ENCODE measurements at regions of chr3 and their contacts with region 1.

Region 1: DNA sequence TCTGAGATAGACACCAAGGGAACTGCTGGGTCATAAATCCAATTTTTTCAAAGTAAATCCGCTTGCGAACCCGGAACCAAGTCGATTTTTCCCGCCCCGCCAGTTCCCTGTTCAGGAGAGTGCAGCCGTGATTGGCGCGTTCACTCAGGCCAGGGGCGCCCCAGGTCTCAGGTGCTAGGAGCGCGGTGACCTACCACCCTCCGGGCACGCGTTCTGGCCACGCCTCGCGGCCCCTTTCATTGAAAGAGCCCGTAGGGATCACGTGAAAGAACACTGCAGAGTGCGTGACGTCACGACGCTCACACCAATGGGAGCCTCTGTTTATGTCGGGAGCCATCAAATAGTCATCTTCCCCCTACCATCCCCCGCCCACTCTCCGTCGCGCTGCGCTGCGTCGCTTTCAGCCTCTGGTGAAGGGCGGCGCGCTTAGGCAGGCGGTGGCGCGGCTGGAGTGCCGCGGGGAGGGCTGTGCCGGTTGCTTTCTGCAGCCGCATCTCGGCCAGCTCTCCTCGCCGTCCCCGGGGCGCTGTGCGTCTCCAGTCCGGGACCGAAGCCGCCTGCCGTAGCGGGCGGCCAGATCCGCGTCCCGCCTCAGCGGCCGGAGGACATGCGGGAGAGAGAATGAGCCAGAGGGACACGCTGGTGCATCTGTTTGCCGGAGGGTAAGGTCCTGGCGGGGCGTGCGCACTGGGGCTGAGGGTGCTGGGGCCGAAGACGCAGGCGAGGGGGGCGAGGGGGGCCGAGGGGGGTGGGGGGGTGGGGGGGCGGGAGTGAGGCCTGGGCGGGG is at the start of gene SLC25A36:
- DNase-seq: peak; percentile 90 to 100 (median 96)
- ATAC-seq: peak; percentile 96
- H3K4me3 ChIP-seq: peak within 1 kb of the TSS; percentile 71 to 78
- H3K4me3 Mint-ChIP-seq: peak within 1 kb of the TSS; percentile 90
- H3K27ac ChIP-seq: peak within 1 kb of the TSS; percentile 85 to 88
- H3K27ac Mint-ChIP-seq: peak within 1 kb of the TSS; percentile 99
- H3K4me1 ChIP-seq: peaks cover 14% of the 10 kb centered on the region
- H3K4me1 Mint-ChIP-seq: peaks cover 36% of the 10 kb centered on the region
- H3K27me3 ChIP-seq: no peaks in the 10 kb centered on the region
- H3K27me3 Mint-ChIP-seq: no peaks in the 10 kb centered on the region
- CTCF ChIP-seq: no peak
- total RNA-seq, gene SLC25A36: 156 to 165 TPM

Region 2: GRCh38 chr3:138941259-138941885 is 2000.3 kb before region 1 on chr3:
- CTCF ChIA-PET with region 1: no interaction called
- POLR2A ChIA-PET with region 1: no interaction called
- intact Hi-C with region 1: loop called in 1 of 2 experiments (anchors 10 kb)
- DNase-seq: peak in 1 of 9 experiments; percentile 40
- ATAC-seq: no peak
- H3K4me3 ChIP-seq: no peak overlapping the region
- H3K4me3 Mint-ChIP-seq: no peak overlapping the region
- H3K27ac ChIP-seq: no peak overlapping the region
- H3K27ac Mint-ChIP-seq: no peak overlapping the region
- H3K4me1 ChIP-seq: peaks cover 58% of the 10 kb centered on the region
- H3K4me1 Mint-ChIP-seq: peaks cover 44% of the 10 kb centered on the region
- H3K27me3 ChIP-seq: peaks cover 69 to 72% of the 10 kb centered on the region in 2 experiments
- H3K27me3 Mint-ChIP-seq: peaks cover 77% of the 10 kb centered on the region
- CTCF ChIP-seq: no peak

Region 3: DNA sequence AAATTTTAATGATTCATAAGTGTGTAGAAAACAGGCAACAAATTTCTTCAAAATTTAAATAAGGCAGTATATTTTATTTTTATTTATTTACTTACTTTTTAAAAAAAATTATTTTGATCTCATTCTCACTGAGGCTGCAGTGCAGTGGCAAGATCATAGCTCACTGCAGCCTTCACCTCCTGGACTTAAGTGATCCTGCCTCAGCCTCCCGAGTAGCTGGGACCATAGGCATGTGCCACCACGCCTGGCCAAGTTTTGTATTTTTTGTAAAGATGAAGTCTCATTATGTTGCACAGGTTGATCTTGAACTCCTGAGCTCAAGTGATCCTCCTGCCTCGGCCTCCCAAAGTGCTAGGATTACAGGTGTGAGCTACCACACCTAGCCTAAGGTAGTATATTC is 1567.5 kb after region 1 on chr3:
- CTCF ChIA-PET with region 1: no interaction called
- POLR2A ChIA-PET with region 1: no interaction called
- intact Hi-C with region 1: loop called in 1 of 2 experiments (anchors 5 kb)
- DNase-seq: peak in 2 of 9 experiments; percentile 15 to 36
- ATAC-seq: peak; percentile 62
- H3K4me3 ChIP-seq: peak overlapping the region in 1 of 2 experiments; percentile 51
- H3K4me3 Mint-ChIP-seq: peak overlapping the region; percentile 90
- H3K27ac ChIP-seq: peak overlapping the region in 1 of 2 experiments; percentile 74
- H3K27ac Mint-ChIP-seq: peak overlapping the region; percentile 95
- H3K4me1 ChIP-seq: no peaks in the 10 kb centered on the region
- H3K4me1 Mint-ChIP-seq: peaks cover 14% of the 10 kb centered on the region
- H3K27me3 ChIP-seq: no peaks in the 10 kb centered on the region
- H3K27me3 Mint-ChIP-seq: no peaks in the 10 kb centered on the region
- CTCF ChIP-seq: no peak

Measured in CD8-positive, alpha-beta T cell (primary cell).